T-cell (primary cell): ENCODE measurements at regions of chr7 and their contacts with region 1.

Region 1: DNA sequence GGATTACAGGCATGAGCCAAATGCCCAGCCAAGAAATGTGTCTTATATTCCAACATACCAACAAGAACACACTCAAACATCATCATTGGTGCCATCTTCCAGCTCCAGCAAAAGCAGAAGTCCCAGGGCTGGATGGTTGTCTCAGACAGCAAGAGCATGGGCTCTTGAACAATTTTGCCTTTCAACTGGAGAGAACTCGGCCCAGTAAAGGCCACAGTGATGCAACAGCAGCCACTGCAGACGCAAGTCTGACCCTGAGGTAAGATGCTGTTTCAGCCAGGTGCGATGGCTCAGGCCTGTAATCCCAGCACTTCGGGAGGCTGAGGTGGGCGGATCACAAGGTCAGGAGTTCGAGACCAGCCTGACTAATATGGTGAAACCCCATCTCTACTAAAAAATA is 52.7 kb upstream of the NFE2L3 start:
- DNase-seq: no peak
- ATAC-seq: no peak
- H3K4me3 ChIP-seq: no peak overlapping the region
- H3K4me3 Mint-ChIP-seq: no peak overlapping the region
- H3K27ac ChIP-seq: no peak overlapping the region
- H3K27ac Mint-ChIP-seq: peak overlapping the region; percentile 52 to 72
- H3K4me1 ChIP-seq: peaks cover 47 to 50% of the 10 kb centered on the region in 2 experiments
- H3K4me1 Mint-ChIP-seq: peaks cover 39 to 60% (median 52%) of the 10 kb centered on the region in 3 donors
- H3K27me3 ChIP-seq: no peaks in the 10 kb centered on the region
- H3K27me3 Mint-ChIP-seq: no peaks in the 10 kb centered on the region

Region 2: GRCh38 chr7:26054386-26054785 is 44.9 kb before region 1 on chr7:
- CTCF ChIA-PET with region 1: no interaction called
- POLR2A ChIA-PET with region 1: interaction called in 1 of 2 experiments, 13 read pairs
- DNase-seq: no peak
- ATAC-seq: no peak
- H3K4me3 ChIP-seq: no peak overlapping the region
- H3K4me3 Mint-ChIP-seq: no peak overlapping the region
- H3K27ac ChIP-seq: no peak overlapping the region
- H3K27ac Mint-ChIP-seq: no peak overlapping the region
- H3K4me1 ChIP-seq: no peaks in the 10 kb centered on the region
- H3K4me1 Mint-ChIP-seq: no peaks in the 10 kb centered on the region
- H3K27me3 ChIP-seq: peaks cover 0 to 14% of the 10 kb centered on the region in 2 experiments
- H3K27me3 Mint-ChIP-seq: peaks cover 41 to 49% of the 10 kb centered on the region in 2 donors

Region 3: GRCh38 chr7:26117142-26117807 is 18.0 kb after region 1 on chr7:
- CTCF ChIA-PET with region 1: no interaction called
- POLR2A ChIA-PET with region 1: no interaction called
- DNase-seq: peak in 1 of 35 experiments; percentile 8
- ATAC-seq: no peak
- H3K4me3 ChIP-seq: no peak overlapping the region
- H3K4me3 Mint-ChIP-seq: no peak overlapping the region
- H3K27ac ChIP-seq: no peak overlapping the region
- H3K27ac Mint-ChIP-seq: no peak overlapping the region
- H3K4me1 ChIP-seq: peaks cover 0 to under 1% of the 10 kb centered on the region in 2 experiments
- H3K4me1 Mint-ChIP-seq: peaks cover 0 to 3% (median under 1%) of the 10 kb centered on the region in 3 donors
- H3K27me3 ChIP-seq: peaks cover 0 to 14% of the 10 kb centered on the region in 2 experiments
- H3K27me3 Mint-ChIP-seq: peaks cover 0 to 3% of the 10 kb centered on the region in 2 donors